Ascending aorta (tissue), 2 donors: ENCODE measurements at regions of chr18 and their contacts with region 1.

Region 1: GRCh38 chr18:45621061-45621511 is 5.8 kb downstream of the SLC14A2 start:
- DNase-seq: peak in 1 of 2 donors; percentile 82
- H3K4me3 ChIP-seq: no peak overlapping the region
- H3K27ac ChIP-seq: no peak overlapping the region
- H3K4me1 ChIP-seq: peaks cover 10 to 44% of the 10 kb centered on the region in 2 donors
- H3K27me3 ChIP-seq: no peaks in the 10 kb centered on the region
- CTCF ChIP-seq: peak; percentile 85 to 97 (median 88)

Region 2: DNA sequence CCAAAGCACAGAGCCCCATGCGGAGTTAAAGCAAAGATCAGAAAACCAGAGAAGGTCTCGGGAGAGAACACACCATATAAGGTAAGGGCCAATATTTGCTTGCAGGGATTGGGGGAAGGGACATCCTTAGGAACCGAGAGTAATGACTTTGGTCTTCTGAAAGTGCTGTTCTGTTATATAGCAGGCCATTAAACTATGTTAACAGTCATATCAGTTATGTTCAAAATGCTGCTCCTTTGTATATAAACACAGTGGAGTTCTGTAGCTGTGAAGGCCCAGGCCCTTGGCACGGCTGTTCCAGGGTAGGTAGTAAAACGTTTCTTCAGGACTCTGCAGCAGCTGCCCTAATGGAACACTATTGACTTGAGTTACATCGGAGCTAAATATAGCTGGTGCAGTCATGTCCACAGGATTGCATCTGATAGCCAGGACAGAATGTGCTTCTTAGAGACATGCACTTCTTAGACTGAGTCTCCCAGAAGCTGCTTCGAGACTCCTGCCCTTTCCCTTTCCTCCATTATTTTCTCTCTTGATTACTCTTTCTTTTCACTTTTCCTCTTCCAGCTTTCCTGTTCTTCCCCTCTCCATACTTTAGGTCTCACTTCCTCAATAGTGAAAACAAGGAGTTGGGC is 818.0 kb before region 1 on chr18:
- intact Hi-C with region 1: loop called (anchors 10 kb)
- DNase-seq: peak in 1 of 2 donors; percentile 86
- H3K4me3 ChIP-seq: peak overlapping the region in 1 of 2 donors; percentile 5
- H3K27ac ChIP-seq: peak overlapping the region; percentile 87 to 90
- H3K4me1 ChIP-seq: peaks cover 5 to 38% of the 10 kb centered on the region in 2 donors
- H3K27me3 ChIP-seq: no peaks in the 10 kb centered on the region
- CTCF ChIP-seq: no peak

Region 3: DNA sequence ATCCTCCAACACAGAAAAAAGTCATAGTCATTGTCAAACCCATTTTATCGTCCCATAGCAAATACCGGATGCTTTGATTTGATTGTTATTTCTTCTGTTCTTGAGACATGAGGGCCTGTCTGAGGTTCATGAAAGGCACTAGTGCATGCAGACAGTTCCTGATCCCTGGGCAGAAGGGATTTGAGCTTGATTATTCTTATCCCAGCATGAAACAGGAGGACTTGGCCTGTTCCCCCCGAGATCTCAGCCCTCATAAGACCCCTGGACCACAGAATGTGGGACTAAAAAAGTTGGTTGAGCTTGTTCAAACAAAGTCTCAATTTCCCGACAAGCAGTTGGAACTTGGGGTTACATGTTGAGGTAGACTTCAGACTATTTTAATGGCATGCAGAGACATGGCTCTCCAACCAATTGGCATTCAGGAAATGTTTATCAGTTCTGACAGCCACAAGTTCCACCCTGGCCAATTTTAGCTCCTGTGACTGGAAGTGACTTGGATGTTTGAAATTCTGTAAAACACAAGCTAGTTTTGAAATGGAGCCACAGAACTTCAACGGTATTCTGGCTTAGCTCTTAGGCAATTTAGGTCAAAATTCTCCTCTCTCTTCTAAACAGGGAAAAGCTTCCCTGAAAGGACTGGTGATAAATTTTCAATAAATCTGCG is 372.7 kb before region 1 on chr18:
- intact Hi-C with region 1: loop called (anchors 5 kb)
- DNase-seq: peak in 1 of 2 donors; percentile 88
- H3K4me3 ChIP-seq: no peak overlapping the region
- H3K27ac ChIP-seq: peak overlapping the region; percentile 89 to 92
- H3K4me1 ChIP-seq: peaks cover 9 to 31% of the 10 kb centered on the region in 2 donors
- H3K27me3 ChIP-seq: no peaks in the 10 kb centered on the region
- CTCF ChIP-seq: no peak

Region 4: GRCh38 chr18:45456090-45457021 is 164.7 kb before region 1 on chr18:
- intact Hi-C with region 1: no loop called
- DNase-seq: no peak
- H3K4me3 ChIP-seq: no peak overlapping the region
- H3K27ac ChIP-seq: no peak overlapping the region
- H3K4me1 ChIP-seq: no peaks in the 10 kb centered on the region
- H3K27me3 ChIP-seq: no peaks in the 10 kb centered on the region
- CTCF ChIP-seq: no peak

Region 5: GRCh38 chr18:45562567-45563479 is 58.3 kb before region 1 on chr18:
- intact Hi-C with region 1: loop called (anchors 5 kb)
- DNase-seq: peak in 1 of 2 donors; percentile 78
- H3K4me3 ChIP-seq: no peak overlapping the region
- H3K27ac ChIP-seq: peak overlapping the region; percentile 84 to 92
- H3K4me1 ChIP-seq: peaks cover 6 to 16% of the 10 kb centered on the region in 2 donors
- H3K27me3 ChIP-seq: no peaks in the 10 kb centered on the region
- CTCF ChIP-seq: no peak

Region 6: GRCh38 chr18:45657357-45658335 is 36.6 kb after region 1 on chr18:
- intact Hi-C with region 1: loop called (anchors 1 kb)
- DNase-seq: no peak
- H3K4me3 ChIP-seq: no peak overlapping the region
- H3K27ac ChIP-seq: peak overlapping the region in 1 of 2 donors; percentile 50
- H3K4me1 ChIP-seq: peaks cover 4 to 22% of the 10 kb centered on the region in 2 donors
- H3K27me3 ChIP-seq: no peaks in the 10 kb centered on the region
- CTCF ChIP-seq: no peak